ENCODE measurements at regions of chr19 and their contacts with region 1.

Region 1: GRCh38 chr19:21084343-21084742 is 2.3 kb downstream of the ZNF714 start:
- DNase-seq: no peak
- H3K4me3 ChIP-seq: no peak overlapping the region
- H3K4me3 Mint-ChIP-seq: no peak overlapping the region
- H3K27ac Mint-ChIP-seq: no peak overlapping the region
- H3K4me1 ChIP-seq: no peaks in the 10 kb centered on the region
- H3K4me1 Mint-ChIP-seq: no peaks in the 10 kb centered on the region
- H3K27me3 ChIP-seq: no peaks in the 10 kb centered on the region
- H3K27me3 Mint-ChIP-seq: no peaks in the 10 kb centered on the region
- CTCF ChIP-seq: no peak

Region 2: DNA sequence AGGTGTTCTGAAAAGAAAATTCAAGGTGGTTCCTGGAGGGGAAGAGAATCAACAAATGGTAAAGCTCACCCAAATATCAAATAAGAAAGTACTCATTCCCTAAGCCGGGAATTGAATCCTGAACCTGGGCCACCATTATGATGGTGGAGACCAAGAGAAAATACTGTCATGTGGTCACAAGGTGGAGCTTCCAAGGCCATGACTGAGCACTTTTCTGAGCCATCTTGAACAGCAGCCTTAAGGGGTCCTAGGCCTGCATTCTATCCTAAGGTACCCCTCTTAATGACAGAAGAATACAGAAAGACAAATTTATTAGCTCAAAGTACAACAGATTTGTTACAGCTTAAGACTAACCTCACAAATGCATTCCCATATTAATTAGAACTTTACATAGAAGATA is 67.1 kb after region 1 on chr19:
- CTCF ChIA-PET with region 1: no interaction called
- POLR2A ChIA-PET with region 1: no interaction called
- intact Hi-C with region 1: loop called (anchors 1 kb)
- DNase-seq: no peak
- H3K4me3 ChIP-seq: no peak overlapping the region
- H3K4me3 Mint-ChIP-seq: no peak overlapping the region
- H3K27ac Mint-ChIP-seq: no peak overlapping the region
- H3K4me1 ChIP-seq: no peaks in the 10 kb centered on the region
- H3K4me1 Mint-ChIP-seq: no peaks in the 10 kb centered on the region
- H3K27me3 ChIP-seq: no peaks in the 10 kb centered on the region
- H3K27me3 Mint-ChIP-seq: no peaks in the 10 kb centered on the region
- CTCF ChIP-seq: no peak

Region 3: DNA sequence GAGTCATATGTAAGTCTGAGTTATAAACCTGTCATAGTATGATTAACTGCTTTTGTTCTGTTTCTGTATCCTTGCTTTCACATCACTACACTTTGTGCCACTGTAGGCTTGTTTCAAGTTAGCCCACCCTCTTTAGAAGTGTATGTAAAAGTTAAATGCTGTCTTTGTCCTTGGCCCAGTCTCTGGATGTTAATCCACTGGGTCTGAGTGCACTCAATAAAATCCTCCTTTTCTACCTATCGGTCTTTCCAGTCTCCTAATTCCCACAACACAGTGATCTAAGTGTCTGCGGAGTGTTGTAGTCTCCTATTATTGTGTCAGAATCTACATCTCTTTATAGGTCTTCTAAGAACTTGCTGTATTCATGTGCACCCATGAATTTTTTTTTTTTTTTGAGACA is 435.1 kb after region 1 on chr19:
- CTCF ChIA-PET with region 1: no interaction called
- POLR2A ChIA-PET with region 1: no interaction called
- intact Hi-C with region 1: no loop called
- DNase-seq: peak in 1 of 2 experiments; percentile 18
- H3K4me3 ChIP-seq: no peak overlapping the region
- H3K4me3 Mint-ChIP-seq: no peak overlapping the region
- H3K27ac Mint-ChIP-seq: no peak overlapping the region
- H3K4me1 ChIP-seq: no peaks in the 10 kb centered on the region
- H3K4me1 Mint-ChIP-seq: no peaks in the 10 kb centered on the region
- H3K27me3 ChIP-seq: no peaks in the 10 kb centered on the region
- H3K27me3 Mint-ChIP-seq: no peaks in the 10 kb centered on the region
- CTCF ChIP-seq: no peak